SK-N-SH (cell line): ENCODE measurements at regions of chr10 and their contacts with region 1.

Region 1: DNA sequence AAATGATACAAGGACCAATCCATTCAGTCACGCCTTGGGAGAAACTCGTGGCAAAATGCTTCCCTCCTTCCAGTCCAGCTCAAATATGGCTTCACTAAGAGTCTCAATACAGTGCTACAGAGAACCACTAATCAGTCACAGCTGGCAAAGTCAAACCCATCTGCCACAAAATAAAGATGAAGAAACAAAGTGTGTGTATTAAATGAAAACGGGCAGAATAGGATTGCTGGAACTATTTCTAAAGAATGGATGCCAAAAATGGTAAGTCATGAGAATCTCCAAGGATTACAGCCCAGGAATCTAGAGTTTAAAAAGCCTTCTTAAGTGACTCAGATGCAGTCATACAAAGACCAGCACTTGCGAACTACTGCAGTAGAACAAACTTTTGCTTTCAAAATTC is 61.9 kb downstream of the CACUL1 start:
- DNase-seq: peak; percentile 44
- H3K4me3 ChIP-seq: no peak overlapping the region
- H3K27ac ChIP-seq: peak overlapping the region; percentile 42 to 47
- H3K4me1 ChIP-seq: peaks cover 5 to 10% of the 10 kb centered on the region in 2 experiments; a peak in 3 of 4 replicates
- H3K27me3 ChIP-seq: no peaks in the 10 kb centered on the region
- CTCF ChIP-seq: no peak
- EP300 ChIP-seq: peak in 1 of 2 experiments; percentile 48; a peak in 1 of 4 replicates
- RAD21 ChIP-seq: no peak

Region 2: DNA sequence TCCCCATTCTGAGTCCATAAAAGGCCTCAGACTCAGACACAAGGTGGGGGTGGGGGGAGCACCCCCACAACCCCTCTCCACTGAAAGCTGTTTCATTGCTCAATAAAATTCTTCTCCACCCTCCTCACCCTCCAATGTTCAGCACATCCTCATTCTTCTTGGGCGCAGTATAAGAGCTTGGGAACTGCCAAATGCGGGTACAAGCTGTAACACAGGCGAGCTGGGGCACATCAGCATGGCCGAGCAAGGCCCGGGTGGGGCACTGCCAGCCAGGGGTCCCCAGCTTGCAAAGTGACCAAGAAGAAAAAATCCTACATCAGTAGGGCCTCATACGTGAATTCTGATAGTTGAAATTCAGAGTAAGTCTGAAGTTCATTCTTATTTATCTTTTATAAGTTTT is 11.8 kb after region 1 on chr10:
- CTCF ChIA-PET with region 1: interaction called, 12 read pairs
- POLR2A ChIA-PET with region 1: no interaction called
- DNase-seq: no peak
- H3K4me3 ChIP-seq: no peak overlapping the region
- H3K27ac ChIP-seq: no peak overlapping the region
- H3K4me1 ChIP-seq: no peaks in the 10 kb centered on the region; a peak in 1 of 4 replicates
- H3K27me3 ChIP-seq: no peaks in the 10 kb centered on the region
- CTCF ChIP-seq: no peak
- EP300 ChIP-seq: no peak
- RAD21 ChIP-seq: no peak